Activated B cell treated with CpG ODN at 0.5 μM for 24 hours (primary cell): ENCODE measurements at regions of chr17 and their contacts with region 1.

Region 1: DNA sequence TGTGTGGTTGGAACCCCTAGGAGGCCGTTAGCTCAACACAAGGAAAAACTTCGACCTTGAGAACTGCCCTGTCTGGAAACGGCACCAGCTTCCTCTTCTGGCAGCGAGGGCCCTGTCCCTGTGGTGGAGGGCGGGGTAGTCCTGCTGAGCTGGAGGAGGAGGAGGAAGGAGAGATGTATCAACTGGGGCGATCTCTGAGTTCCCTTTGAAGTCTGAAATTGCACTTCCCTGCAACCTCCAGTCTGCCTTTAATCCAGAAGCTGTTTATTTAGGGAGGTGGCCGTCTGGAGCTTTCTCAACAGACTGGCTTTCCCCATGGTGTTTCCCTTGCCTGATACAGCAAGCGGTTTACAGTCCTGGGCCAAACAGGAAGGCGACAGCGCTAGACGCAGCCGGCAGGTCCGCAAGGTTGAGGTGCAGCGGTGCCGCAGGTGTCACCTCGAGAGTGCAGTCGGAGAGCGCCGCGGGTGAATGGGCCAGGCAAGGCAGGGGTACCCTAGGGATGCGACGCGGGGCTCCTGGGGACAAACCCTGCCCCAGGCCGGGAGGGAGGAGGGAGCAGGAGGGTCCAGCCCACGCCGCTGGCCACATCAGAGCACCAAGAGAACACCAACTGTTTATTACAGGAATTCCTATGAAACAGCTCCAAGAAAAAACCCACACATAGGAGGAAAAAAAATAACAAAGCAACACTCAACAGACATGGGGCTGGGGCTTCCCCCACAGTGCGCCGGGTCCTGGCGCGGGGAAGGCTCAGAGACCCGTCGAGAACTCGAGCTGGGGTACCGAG is 11.4 kb upstream of the MRPS23 start:
- DNase-seq: no peak
- ATAC-seq: peak; percentile 69
- H3K4me3 Mint-ChIP-seq: peak overlapping the region; percentile 79
- H3K27ac Mint-ChIP-seq: no peak overlapping the region
- H3K4me1 Mint-ChIP-seq: peaks cover 14% of the 10 kb centered on the region
- H3K27me3 Mint-ChIP-seq: peaks cover 21% of the 10 kb centered on the region
- CTCF ChIP-seq: no peak

Region 2: GRCh38 chr17:57649731-57650484 is 211.3 kb before region 1 on chr17:
- CTCF ChIA-PET with region 1: no interaction called
- POLR2A ChIA-PET with region 1: interaction called, 14 read pairs
- intact Hi-C with region 1: no loop called
- DNase-seq: no peak
- ATAC-seq: no peak
- H3K4me3 Mint-ChIP-seq: no peak overlapping the region
- H3K27ac Mint-ChIP-seq: no peak overlapping the region
- H3K4me1 Mint-ChIP-seq: peaks cover 7% of the 10 kb centered on the region
- H3K27me3 Mint-ChIP-seq: no peaks in the 10 kb centered on the region
- CTCF ChIP-seq: no peak